Endothelial cell of umbilical vein (primary cell): ENCODE measurements at regions of chr20 and their contacts with region 1.

Region 1: GRCh38 chr20:48904365-48905296 is 16.9 kb upstream of the ARFGEF2 start:
- DNase-seq: peak; percentile 76
- H3K4me3 ChIP-seq: no peak overlapping the region
- H3K27ac ChIP-seq: no peak overlapping the region
- H3K4me1 ChIP-seq: peaks cover 14% of the 10 kb centered on the region
- H3K27me3 ChIP-seq: no peaks in the 10 kb centered on the region
- CTCF ChIP-seq: peak; percentile 69 to 76
- POLR2A ChIP-seq: no peak

Region 2: GRCh38 chr20:48635433-48636310 is 269.0 kb before region 1 on chr20:
- CTCF ChIA-PET with region 1: interaction called, 8 read pairs
- POLR2A ChIA-PET with region 1: no interaction called
- dilution Hi-C with region 1: no loop called
- intact Hi-C with region 1: loop called (anchors 1 kb)
- DNase-seq: peak; percentile 55
- H3K4me3 ChIP-seq: no peak overlapping the region
- H3K27ac ChIP-seq: no peak overlapping the region
- H3K4me1 ChIP-seq: peaks cover 23% of the 10 kb centered on the region
- H3K27me3 ChIP-seq: no peaks in the 10 kb centered on the region
- CTCF ChIP-seq: peak; percentile 96 to 97
- POLR2A ChIP-seq: no peak

Region 3: DNA sequence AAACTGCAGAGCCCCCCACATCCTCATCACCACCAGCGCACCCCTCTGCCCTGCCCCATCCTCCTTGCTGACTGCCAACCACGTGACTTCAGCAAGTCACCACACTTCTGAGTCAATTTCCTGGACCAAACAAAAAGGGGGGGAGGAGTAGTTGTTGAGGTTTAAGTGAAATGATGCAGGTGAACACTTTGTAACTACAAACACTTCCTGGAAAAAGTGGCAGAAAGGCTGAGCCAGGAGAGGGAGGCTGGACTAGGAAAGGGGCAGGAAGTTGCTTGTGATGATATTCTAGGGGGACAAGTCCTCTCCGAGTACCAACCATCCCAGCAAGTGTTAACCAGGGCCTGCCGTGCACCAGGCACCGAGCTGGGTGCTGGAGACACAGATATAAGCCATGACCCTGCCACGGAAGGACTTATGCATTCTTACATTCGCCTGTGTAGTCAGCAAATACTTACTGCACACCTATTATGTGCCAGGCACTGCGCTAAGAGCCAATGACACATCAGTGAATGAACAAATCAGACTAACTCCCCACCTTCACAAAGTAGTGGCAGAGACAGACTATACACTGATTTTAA is 144.1 kb before region 1 on chr20:
- CTCF ChIA-PET with region 1: interaction called, 4 read pairs
- POLR2A ChIA-PET with region 1: no interaction called
- dilution Hi-C with region 1: no loop called
- intact Hi-C with region 1: loop called (anchors 10 kb)
- DNase-seq: peak; percentile 84
- H3K4me3 ChIP-seq: no peak overlapping the region
- H3K27ac ChIP-seq: peak overlapping the region; percentile 80
- H3K4me1 ChIP-seq: peaks cover 47% of the 10 kb centered on the region
- H3K27me3 ChIP-seq: no peaks in the 10 kb centered on the region
- CTCF ChIP-seq: no peak
- POLR2A ChIP-seq: no peak

Region 4: GRCh38 chr20:48933017-48933766 is 28.6 kb after region 1 on chr20:
- CTCF ChIA-PET with region 1: no interaction called
- POLR2A ChIA-PET with region 1: no interaction called
- dilution Hi-C with region 1: no loop called
- intact Hi-C with region 1: no loop called
- DNase-seq: no peak
- H3K4me3 ChIP-seq: no peak overlapping the region
- H3K27ac ChIP-seq: no peak overlapping the region
- H3K4me1 ChIP-seq: peaks cover 31% of the 10 kb centered on the region
- H3K27me3 ChIP-seq: no peaks in the 10 kb centered on the region
- CTCF ChIP-seq: no peak
- POLR2A ChIP-seq: no peak

Region 5: GRCh38 chr20:49166534-49167449 is 262.2 kb after region 1 on chr20:
- CTCF ChIA-PET with region 1: no interaction called
- POLR2A ChIA-PET with region 1: no interaction called
- dilution Hi-C with region 1: no loop called
- intact Hi-C with region 1: no loop called
- DNase-seq: no peak
- H3K4me3 ChIP-seq: no peak overlapping the region
- H3K27ac ChIP-seq: no peak overlapping the region
- H3K4me1 ChIP-seq: peaks cover 2% of the 10 kb centered on the region
- H3K27me3 ChIP-seq: no peaks in the 10 kb centered on the region
- CTCF ChIP-seq: no peak
- POLR2A ChIP-seq: no peak

Region 6: GRCh38 chr20:49323622-49324238 is 419.1 kb after region 1 on chr20:
- CTCF ChIA-PET with region 1: no interaction called
- POLR2A ChIA-PET with region 1: no interaction called
- dilution Hi-C with region 1: no loop called
- intact Hi-C with region 1: no loop called
- DNase-seq: peak; percentile 89
- H3K4me3 ChIP-seq: no peak overlapping the region
- H3K27ac ChIP-seq: peak overlapping the region; percentile 19
- H3K4me1 ChIP-seq: peaks cover 12% of the 10 kb centered on the region
- H3K27me3 ChIP-seq: peaks cover 31 to 33% of the 10 kb centered on the region in 2 experiments
- CTCF ChIP-seq: peak; percentile 12 to 30
- POLR2A ChIP-seq: no peak